Posterior cingulate gyrus (tissue), 11 donors: ENCODE measurements at regions of chr3 and their contacts with region 1.

Region 1: DNA sequence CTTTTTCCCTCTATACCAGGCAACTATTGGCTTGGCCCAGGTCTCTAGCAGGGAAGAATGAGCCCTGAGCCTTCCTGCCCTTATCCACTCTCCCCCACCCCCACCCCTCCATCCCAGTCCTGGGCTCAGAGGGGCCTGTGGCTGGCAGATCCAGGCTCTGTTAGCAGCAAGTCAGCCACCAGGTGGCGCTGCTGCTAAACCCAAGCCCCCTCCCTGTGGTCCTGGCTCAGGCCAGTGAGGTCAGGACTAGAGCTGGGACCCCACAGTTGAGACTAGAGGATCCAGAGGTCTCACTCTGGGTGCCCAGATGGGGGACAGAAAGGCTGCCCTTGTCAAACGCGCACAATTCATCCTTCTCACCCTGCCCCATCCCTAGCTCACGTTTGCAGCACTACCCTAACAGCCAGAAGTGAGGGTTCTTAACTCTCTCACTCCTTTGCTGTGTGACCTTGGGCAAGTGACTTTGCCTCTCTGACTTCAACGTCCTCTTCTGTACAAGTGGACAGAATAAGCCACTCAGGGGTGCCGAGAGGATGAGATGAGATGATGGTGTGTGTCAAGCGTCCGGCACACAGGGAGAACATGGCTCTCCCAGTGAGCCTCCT is 46.8 kb upstream of the SLC6A1 start:
- DNase-seq: peak; percentile 35 to 97 (median 79)

Region 2: GRCh38 chr3:10581251-10581650 is 364.5 kb before region 1 on chr3:
- intact Hi-C with region 1: no loop called
- DNase-seq: peak in 7 of 10 donors; percentile 41 to 91 (median 65)

Region 3: GRCh38 chr3:10758304-10759061 is 187.3 kb before region 1 on chr3:
- intact Hi-C with region 1: loop called (anchors 5 kb)
- DNase-seq: peak; percentile 53 to 96 (median 76)

Region 4: DNA sequence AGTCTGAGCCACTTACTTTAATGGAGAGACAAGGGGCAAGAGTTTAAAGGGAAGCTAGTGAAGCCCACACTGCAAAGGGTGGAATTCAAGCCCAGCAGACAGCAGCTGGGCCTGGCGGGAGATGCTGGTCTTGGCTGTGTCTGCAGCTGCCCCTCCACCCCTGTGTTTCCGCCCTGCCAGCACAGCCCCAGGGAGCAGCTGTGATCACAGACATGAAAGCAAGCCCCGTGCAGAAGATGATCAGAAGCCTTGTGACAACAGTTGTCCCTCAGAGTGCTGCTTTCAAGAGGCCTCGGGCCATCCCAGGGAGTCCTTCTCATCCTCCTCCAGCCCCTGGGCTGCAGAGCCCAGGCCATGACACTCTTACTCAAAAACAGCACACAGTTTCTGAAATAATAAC is 22.6 kb after region 1 on chr3:
- intact Hi-C with region 1: loop called (anchors 1 kb)
- DNase-seq: peak; percentile 53 to 96 (median 68)

Region 5: GRCh38 chr3:10983219-10983916 is 37.6 kb after region 1 on chr3:
- intact Hi-C with region 1: loop called (anchors 5 kb)
- DNase-seq: peak in 3 of 10 donors; percentile 53 to 87 (median 59)

Region 6: GRCh38 chr3:11021611-11022011 is 75.8 kb after region 1 on chr3:
- intact Hi-C with region 1: loop called (anchors 1 kb)
- DNase-seq: peak in 9 of 10 donors; percentile 54 to 96 (median 66)

Region 7: GRCh38 chr3:11060500-11061251 is 114.9 kb after region 1 on chr3:
- intact Hi-C with region 1: loop called (anchors 1 kb)
- DNase-seq: peak; percentile 59 to 96 (median 78)